Mammary epithelial cell (primary cell): ENCODE measurements at regions of chr4 and their contacts with region 1.

Region 1: GRCh38 chr4:85147439-85148076 is 181.1 kb upstream of the WDFY3 start:
- DNase-seq: peak; percentile 41
- H3K4me3 ChIP-seq: no peak overlapping the region
- H3K27ac ChIP-seq: no peak overlapping the region
- H3K4me1 ChIP-seq: peaks cover 3% of the 10 kb centered on the region
- H3K27me3 ChIP-seq: no peaks in the 10 kb centered on the region
- CTCF ChIP-seq: peak; percentile 47 to 61

Region 2: GRCh38 chr4:84938316-84938715 is 209.2 kb before region 1 on chr4:
- CTCF ChIA-PET with region 1: no interaction called
- dilution Hi-C with region 1: no loop called
- in situ Hi-C with region 1: no loop called
- intact Hi-C with region 1: no loop called
- DNase-seq: peak; percentile 33
- H3K4me3 ChIP-seq: peak overlapping the region in 1 of 3 experiments; percentile 4
- H3K27ac ChIP-seq: peak overlapping the region; percentile 67
- H3K4me1 ChIP-seq: peaks cover 13% of the 10 kb centered on the region
- H3K27me3 ChIP-seq: no peaks in the 10 kb centered on the region
- CTCF ChIP-seq: no peak

Region 3: GRCh38 chr4:85084380-85085094 is 63.0 kb before region 1 on chr4:
- CTCF ChIA-PET with region 1: no interaction called
- dilution Hi-C with region 1: no loop called
- in situ Hi-C with region 1: no loop called
- intact Hi-C with region 1: loop called (anchors 2 kb)
- DNase-seq: peak; percentile 56
- H3K4me3 ChIP-seq: no peak overlapping the region
- H3K27ac ChIP-seq: no peak overlapping the region
- H3K4me1 ChIP-seq: no peaks in the 10 kb centered on the region
- H3K27me3 ChIP-seq: peaks cover 5% of the 10 kb centered on the region
- CTCF ChIP-seq: peak; percentile 59 to 73